ENCODE measurements at regions of chr15 and their contacts with region 1.

Region 1: GRCh38 chr15:50641288-50641687 is 45.3 kb downstream of the TRPM7 start:
- DNase-seq: no peak
- H3K4me3 ChIP-seq: no peak overlapping the region
- H3K27ac ChIP-seq: no peak overlapping the region
- H3K4me1 ChIP-seq: no peaks in the 10 kb centered on the region
- H3K27me3 ChIP-seq: no peaks in the 10 kb centered on the region
- CTCF ChIP-seq: no peak

Region 2: DNA sequence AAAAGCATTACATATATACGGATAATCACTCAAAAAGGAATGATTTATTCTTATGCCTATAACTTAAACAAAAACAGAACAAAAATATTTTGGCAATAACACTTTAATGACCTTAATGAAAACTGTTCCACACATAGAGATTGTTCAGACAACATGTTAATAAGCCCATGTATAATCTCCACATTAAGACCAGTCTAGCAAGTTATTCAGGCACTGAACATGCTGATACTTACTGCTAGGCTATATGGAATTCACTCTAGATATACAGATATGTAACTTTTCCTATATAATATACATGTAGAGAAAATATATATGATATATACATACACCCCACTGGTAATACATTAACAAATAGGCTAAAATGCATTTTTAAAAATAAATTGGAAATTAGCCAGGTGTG is 51.0 kb before region 1 on chr15:
- intact Hi-C with region 1: loop called (anchors 10 kb)
- DNase-seq: no peak
- H3K4me3 ChIP-seq: no peak overlapping the region
- H3K27ac ChIP-seq: no peak overlapping the region
- H3K4me1 ChIP-seq: no peaks in the 10 kb centered on the region
- H3K27me3 ChIP-seq: no peaks in the 10 kb centered on the region
- CTCF ChIP-seq: no peak

Region 3: DNA sequence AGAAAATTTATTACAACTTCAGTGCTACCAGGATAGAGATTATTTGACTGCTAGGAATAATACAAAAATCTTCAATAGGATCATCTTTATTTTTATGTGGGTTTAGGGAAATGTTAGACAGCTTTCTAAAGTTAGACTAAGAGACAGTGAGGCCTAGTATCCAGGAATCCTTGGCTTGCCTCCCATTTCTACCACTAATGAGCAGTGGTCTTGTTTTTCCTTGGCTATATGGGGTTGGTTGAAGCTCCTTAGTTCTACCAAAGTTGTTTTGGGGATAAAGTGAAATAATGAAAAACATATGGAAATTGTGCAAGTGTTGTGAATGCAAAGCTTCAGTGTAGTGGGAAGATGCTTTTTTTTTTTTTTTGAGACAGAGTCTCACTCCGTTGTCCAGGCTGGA is 284.0 kb after region 1 on chr15:
- intact Hi-C with region 1: no loop called
- DNase-seq: no peak
- H3K4me3 ChIP-seq: no peak overlapping the region
- H3K27ac ChIP-seq: no peak overlapping the region
- H3K4me1 ChIP-seq: no peaks in the 10 kb centered on the region
- H3K27me3 ChIP-seq: no peaks in the 10 kb centered on the region
- CTCF ChIP-seq: no peak